CD8-positive, alpha-beta T cell (primary cell): ENCODE measurements at regions of chr7 and their contacts with region 1.

Region 1: DNA sequence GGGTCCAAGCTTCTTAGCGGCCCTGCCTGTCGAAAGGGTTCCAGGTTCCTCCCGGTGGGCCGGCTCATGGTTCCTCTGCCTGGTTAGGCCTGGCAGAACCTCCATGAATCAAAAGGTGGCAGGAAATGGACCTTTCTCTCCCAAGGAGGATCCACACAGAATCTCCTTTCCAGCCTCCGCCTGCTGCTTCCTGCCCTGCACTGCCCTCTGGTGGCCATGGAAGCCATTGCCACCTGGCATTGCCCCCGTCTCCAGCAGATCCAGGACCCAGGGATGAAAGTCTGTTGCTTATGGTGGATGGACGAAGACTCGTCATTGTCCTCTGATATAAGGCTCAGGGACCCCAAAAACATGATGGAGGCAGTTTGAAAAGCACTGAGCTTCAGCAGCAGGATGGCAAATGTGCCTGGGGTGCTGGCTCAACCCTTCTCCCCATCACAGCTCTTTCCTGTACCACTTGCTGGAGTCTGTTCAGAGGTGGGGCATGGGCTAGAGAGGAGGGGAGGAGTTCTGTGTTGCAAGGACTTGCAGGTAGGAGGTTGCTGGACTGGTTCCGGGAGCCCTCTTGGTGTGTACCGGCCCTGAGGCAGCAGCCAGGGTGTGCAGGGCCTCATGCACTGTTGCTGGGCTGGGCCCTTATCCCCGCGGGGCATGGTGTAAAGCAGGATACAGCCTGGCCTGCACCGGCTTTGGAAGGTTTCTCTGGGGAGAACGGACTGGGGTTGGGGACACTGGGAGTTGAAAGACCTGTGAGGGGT is 11.3 kb upstream of the INMT start:
- DNase-seq: peak; percentile 51 to 91 (median 78)
- ATAC-seq: peak; percentile 57
- H3K4me3 ChIP-seq: no peak overlapping the region
- H3K4me3 Mint-ChIP-seq: no peak overlapping the region
- H3K27ac ChIP-seq: no peak overlapping the region
- H3K27ac Mint-ChIP-seq: peak overlapping the region; percentile 24
- H3K4me1 ChIP-seq: peaks cover 38% of the 10 kb centered on the region
- H3K4me1 Mint-ChIP-seq: peaks cover 37% of the 10 kb centered on the region
- H3K27me3 ChIP-seq: no peaks in the 10 kb centered on the region
- H3K27me3 Mint-ChIP-seq: no peaks in the 10 kb centered on the region
- CTCF ChIP-seq: peak; percentile 99

Region 2: GRCh38 chr7:30335763-30336487 is 404.7 kb before region 1 on chr7:
- CTCF ChIA-PET with region 1: no interaction called
- POLR2A ChIA-PET with region 1: no interaction called
- intact Hi-C with region 1: no loop called
- DNase-seq: no peak
- ATAC-seq: no peak
- H3K4me3 ChIP-seq: no peak overlapping the region
- H3K4me3 Mint-ChIP-seq: no peak overlapping the region
- H3K27ac ChIP-seq: no peak overlapping the region
- H3K27ac Mint-ChIP-seq: no peak overlapping the region
- H3K4me1 ChIP-seq: peaks cover 8% of the 10 kb centered on the region
- H3K4me1 Mint-ChIP-seq: peaks cover 73% of the 10 kb centered on the region
- H3K27me3 ChIP-seq: no peaks in the 10 kb centered on the region
- H3K27me3 Mint-ChIP-seq: no peaks in the 10 kb centered on the region
- CTCF ChIP-seq: no peak

Region 3: GRCh38 chr7:30548762-30549344 is 191.8 kb before region 1 on chr7:
- CTCF ChIA-PET with region 1: interaction called, 53 read pairs
- POLR2A ChIA-PET with region 1: interaction called, 4 read pairs
- intact Hi-C with region 1: loop called (anchors 1 to 2 kb)
- DNase-seq: peak in 6 of 9 experiments; percentile 4 to 53 (median 40)
- ATAC-seq: peak; percentile 57
- H3K4me3 ChIP-seq: no peak overlapping the region
- H3K4me3 Mint-ChIP-seq: no peak overlapping the region
- H3K27ac ChIP-seq: no peak overlapping the region
- H3K27ac Mint-ChIP-seq: no peak overlapping the region
- H3K4me1 ChIP-seq: no peaks in the 10 kb centered on the region
- H3K4me1 Mint-ChIP-seq: no peaks in the 10 kb centered on the region
- H3K27me3 ChIP-seq: no peaks in the 10 kb centered on the region
- H3K27me3 Mint-ChIP-seq: no peaks in the 10 kb centered on the region
- CTCF ChIP-seq: peak; percentile 71

Region 4: DNA sequence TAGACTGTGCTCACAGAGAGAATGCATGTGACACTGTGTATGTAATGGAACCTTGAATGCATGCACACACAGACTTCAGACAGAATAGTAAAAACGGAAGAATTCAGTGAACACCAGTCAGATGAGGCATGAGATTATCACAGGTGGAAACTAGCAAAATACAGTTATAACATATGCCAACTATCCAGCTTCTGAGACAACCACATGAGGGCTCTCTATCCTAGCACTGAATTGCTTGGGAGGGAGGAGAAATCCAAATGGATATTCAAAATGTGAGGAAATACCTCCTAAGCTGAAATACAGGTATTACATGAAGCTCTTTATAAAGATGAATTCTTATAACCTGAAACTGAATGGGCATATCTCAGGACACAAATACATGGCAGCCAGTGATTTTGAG is 115.3 kb before region 1 on chr7:
- CTCF ChIA-PET with region 1: interaction called, 9 read pairs
- POLR2A ChIA-PET with region 1: no interaction called
- intact Hi-C with region 1: loop called (anchors 5 to 10 kb)
- DNase-seq: no peak
- ATAC-seq: no peak
- H3K4me3 ChIP-seq: no peak overlapping the region
- H3K4me3 Mint-ChIP-seq: no peak overlapping the region
- H3K27ac ChIP-seq: no peak overlapping the region
- H3K27ac Mint-ChIP-seq: no peak overlapping the region
- H3K4me1 ChIP-seq: no peaks in the 10 kb centered on the region
- H3K4me1 Mint-ChIP-seq: no peaks in the 10 kb centered on the region
- H3K27me3 ChIP-seq: no peaks in the 10 kb centered on the region
- H3K27me3 Mint-ChIP-seq: no peaks in the 10 kb centered on the region
- CTCF ChIP-seq: no peak

Region 5: DNA sequence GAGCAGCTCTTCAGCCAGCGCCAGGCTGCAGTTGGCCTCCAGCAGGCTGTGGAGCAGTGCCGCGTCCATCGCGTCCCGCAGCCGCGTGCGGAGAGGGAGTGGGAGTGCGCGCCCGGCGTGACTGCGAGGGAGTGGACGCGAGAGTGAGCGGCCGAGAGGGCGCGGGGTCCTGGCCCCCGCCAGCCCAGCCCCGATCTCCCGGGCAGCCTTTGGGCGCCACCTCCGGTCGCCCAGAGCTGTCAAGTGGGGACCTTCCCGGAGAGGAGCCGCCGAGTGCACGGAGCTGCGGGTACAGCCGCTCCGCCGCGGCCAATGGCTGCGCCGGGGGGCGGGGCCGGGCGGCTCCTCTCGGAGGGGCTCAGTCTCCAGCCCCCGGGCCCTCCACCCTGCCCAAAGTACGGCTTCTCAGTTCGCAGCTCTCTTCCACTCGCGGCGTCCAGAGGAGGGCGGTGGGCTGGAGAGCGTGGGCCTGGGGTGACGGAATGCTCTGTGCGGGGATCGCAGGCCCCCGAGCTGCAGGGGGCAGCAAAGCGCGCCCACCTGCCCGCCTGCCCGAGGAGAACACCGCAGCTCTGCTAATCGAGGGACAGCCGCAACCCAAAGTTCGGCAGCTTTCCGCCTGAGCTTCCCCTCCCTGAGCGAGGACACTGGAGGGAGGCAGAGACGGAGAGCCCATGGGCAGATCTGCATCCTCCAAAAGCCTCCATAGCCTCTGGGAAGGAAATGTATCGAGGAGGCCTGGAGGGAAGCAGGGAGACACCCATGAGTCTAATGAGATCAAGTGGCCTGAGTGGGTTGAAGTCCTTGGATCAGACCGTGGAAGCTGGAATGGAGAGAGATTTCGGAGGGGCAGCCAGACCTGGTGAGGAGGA is 58.2 kb before region 1 on chr7 and contains the start of gene CRHR2:
- CTCF ChIA-PET with region 1: interaction called, 151 read pairs
- POLR2A ChIA-PET with region 1: interaction called, 7 read pairs
- intact Hi-C with region 1: loop called (anchors 1 kb)
- DNase-seq: peak in 7 of 9 experiments; percentile 6 to 68 (median 49)
- ATAC-seq: peak; percentile 87
- H3K4me3 ChIP-seq: peak within 1 kb of the TSS; percentile 34 to 40
- H3K4me3 Mint-ChIP-seq: peak within 1 kb of the TSS; percentile 82
- H3K27ac ChIP-seq: no peak within 1 kb of the TSS
- H3K27ac Mint-ChIP-seq: no peak within 1 kb of the TSS
- H3K4me1 ChIP-seq: peaks cover 7% of the 10 kb centered on the region
- H3K4me1 Mint-ChIP-seq: peaks cover 12% of the 10 kb centered on the region
- H3K27me3 ChIP-seq: peaks cover 12 to 14% of the 10 kb centered on the region in 2 experiments
- H3K27me3 Mint-ChIP-seq: peaks cover 55% of the 10 kb centered on the region
- CTCF ChIP-seq: peak; percentile 60
- total RNA-seq, gene CRHR2: 0.11 TPM in 1 of 2 experiments, not detected in the other

Region 6: GRCh38 chr7:30708976-30709375 is 31.6 kb before region 1 on chr7:
- CTCF ChIA-PET with region 1: interaction called, 107 read pairs
- POLR2A ChIA-PET with region 1: no interaction called
- intact Hi-C with region 1: no loop called
- DNase-seq: no peak
- ATAC-seq: no peak
- H3K4me3 ChIP-seq: no peak overlapping the region
- H3K4me3 Mint-ChIP-seq: no peak overlapping the region
- H3K27ac ChIP-seq: no peak overlapping the region
- H3K27ac Mint-ChIP-seq: no peak overlapping the region
- H3K4me1 ChIP-seq: no peaks in the 10 kb centered on the region
- H3K4me1 Mint-ChIP-seq: no peaks in the 10 kb centered on the region
- H3K27me3 ChIP-seq: no peaks in the 10 kb centered on the region
- H3K27me3 Mint-ChIP-seq: no peaks in the 10 kb centered on the region
- CTCF ChIP-seq: no peak

Region 7: GRCh38 chr7:30750683-30751650 is 10.4 kb after region 1 on chr7:
- CTCF ChIA-PET with region 1: interaction called, 11 read pairs
- POLR2A ChIA-PET with region 1: interaction called, 3 read pairs
- intact Hi-C with region 1: no loop called
- DNase-seq: no peak
- ATAC-seq: no peak
- H3K4me3 ChIP-seq: no peak overlapping the region
- H3K4me3 Mint-ChIP-seq: no peak overlapping the region
- H3K27ac ChIP-seq: no peak overlapping the region
- H3K27ac Mint-ChIP-seq: no peak overlapping the region
- H3K4me1 ChIP-seq: no peaks in the 10 kb centered on the region
- H3K4me1 Mint-ChIP-seq: no peaks in the 10 kb centered on the region
- H3K27me3 ChIP-seq: no peaks in the 10 kb centered on the region
- H3K27me3 Mint-ChIP-seq: no peaks in the 10 kb centered on the region
- CTCF ChIP-seq: no peak